ENCODE measurements at regions of chr17 and their contacts with region 1.

Region 1: GRCh38 chr17:49997791-49998703 is 3.0 kb upstream of the DLX3 start:
- DNase-seq: peak; percentile 72 to 89 (median 80)
- H3K4me3 ChIP-seq: no peak overlapping the region
- H3K4me3 Mint-ChIP-seq: no peak overlapping the region
- H3K27ac ChIP-seq: no peak overlapping the region
- H3K27ac Mint-ChIP-seq: no peak overlapping the region
- H3K4me1 ChIP-seq: peaks cover 22% of the 10 kb centered on the region
- H3K4me1 Mint-ChIP-seq: peaks cover 25 to 39% (median 29%) of the 10 kb centered on the region in 3 donors
- H3K27me3 ChIP-seq: peaks cover 58% of the 10 kb centered on the region
- H3K27me3 Mint-ChIP-seq: peaks cover 53 to 80% of the 10 kb centered on the region in 2 donors

Region 2: DNA sequence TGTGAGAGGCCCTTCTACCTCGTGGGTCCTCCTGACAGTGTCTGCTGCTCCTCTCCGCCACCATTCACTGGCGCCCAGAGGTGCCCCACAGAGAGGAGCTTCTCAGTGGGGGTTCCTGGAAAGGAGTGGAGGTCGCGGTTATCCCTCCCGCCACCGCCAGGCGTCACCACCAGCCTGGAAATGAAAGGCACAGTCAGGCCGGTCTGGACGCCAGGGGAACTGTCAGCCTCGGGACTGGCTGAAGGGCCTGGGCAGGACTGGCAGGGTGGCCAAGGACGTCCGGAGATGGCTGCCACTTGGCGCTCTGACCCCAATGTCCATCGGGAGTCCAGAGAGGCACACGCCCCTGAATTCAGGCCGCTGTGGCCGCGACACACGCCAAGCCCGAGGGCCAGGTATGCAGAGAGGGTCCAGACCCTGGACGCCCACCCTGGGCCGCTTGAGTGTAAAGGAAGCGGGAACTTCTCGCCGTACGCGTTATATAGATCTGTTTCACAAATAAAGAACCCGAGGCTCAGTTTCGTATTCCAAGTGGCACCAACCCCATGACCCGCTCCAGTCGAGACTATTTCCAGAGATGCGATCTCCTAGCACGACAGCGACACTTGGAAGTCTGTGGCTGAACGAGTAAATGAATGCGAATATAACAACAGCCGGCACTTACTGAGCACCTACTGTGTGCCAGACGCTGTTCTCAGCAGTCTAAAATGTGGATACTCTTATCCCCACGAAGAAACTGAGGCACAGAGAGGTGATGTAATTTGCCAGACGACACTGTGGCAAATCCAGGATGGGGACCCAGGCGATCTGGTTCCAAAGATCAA is 430.0 kb before region 1 on chr17:
- CTCF ChIA-PET with region 1: interaction called, 49 read pairs
- POLR2A ChIA-PET with region 1: no interaction called
- DNase-seq: peak; percentile 69 to 84 (median 75)
- H3K4me3 ChIP-seq: peak overlapping the region; percentile 59
- H3K4me3 Mint-ChIP-seq: peak overlapping the region; percentile 48 to 79 (median 66)
- H3K27ac ChIP-seq: no peak overlapping the region
- H3K27ac Mint-ChIP-seq: peak overlapping the region in 4 of 8 donors; percentile 11 to 50 (median 32)
- H3K4me1 ChIP-seq: peaks cover 16% of the 10 kb centered on the region
- H3K4me1 Mint-ChIP-seq: peaks cover 13 to 24% (median 17%) of the 10 kb centered on the region in 3 donors
- H3K27me3 ChIP-seq: no peaks in the 10 kb centered on the region
- H3K27me3 Mint-ChIP-seq: peaks cover 18 to 23% of the 10 kb centered on the region in 2 donors

Region 3: DNA sequence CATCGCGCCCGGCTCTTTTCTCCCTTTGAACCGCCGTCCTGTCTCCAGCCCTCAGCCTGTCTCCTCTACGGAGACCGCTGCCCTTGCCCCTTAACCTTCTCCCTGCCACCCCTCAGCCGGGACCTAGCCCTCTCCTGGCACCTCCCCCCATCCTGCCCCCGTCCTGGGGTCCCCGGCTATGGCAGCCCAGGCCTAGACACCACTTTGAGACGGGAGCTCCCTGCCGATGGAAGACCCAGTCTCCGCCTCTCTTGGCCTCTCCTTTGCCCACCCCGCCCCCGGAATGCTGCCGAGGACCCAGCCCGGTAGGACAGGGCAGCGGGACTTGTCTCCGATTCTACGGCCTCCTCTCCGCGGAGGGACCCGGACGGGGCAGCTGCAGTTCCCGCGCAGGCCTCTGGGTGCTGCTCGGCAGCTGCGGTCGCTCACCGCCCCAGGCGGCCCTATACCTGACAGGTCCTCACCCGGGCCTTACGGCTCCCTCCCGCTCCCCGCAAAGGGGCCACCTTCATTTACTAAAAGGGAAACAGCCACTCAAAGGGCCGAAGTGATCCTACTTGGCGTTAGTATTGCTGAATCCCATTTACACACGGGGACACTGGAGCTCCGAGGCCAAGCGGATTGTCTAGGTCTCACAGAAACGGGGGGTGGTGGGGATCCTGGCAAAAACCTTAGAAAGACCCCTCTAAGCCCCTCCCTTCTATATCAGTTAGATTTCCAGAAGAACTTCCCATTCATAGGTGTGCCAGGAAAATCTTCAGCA is 117.6 kb before region 1 on chr17:
- CTCF ChIA-PET with region 1: interaction called, 35 read pairs
- POLR2A ChIA-PET with region 1: no interaction called
- DNase-seq: peak; percentile 52 to 76 (median 58)
- H3K4me3 ChIP-seq: no peak overlapping the region
- H3K4me3 Mint-ChIP-seq: peak overlapping the region in 3 of 7 donors; percentile 34 to 39 (median 35)
- H3K27ac ChIP-seq: no peak overlapping the region
- H3K27ac Mint-ChIP-seq: no peak overlapping the region
- H3K4me1 ChIP-seq: peaks cover 6% of the 10 kb centered on the region
- H3K4me1 Mint-ChIP-seq: peaks cover 0 to 7% (median 5%) of the 10 kb centered on the region in 3 donors
- H3K27me3 ChIP-seq: peaks cover 12% of the 10 kb centered on the region
- H3K27me3 Mint-ChIP-seq: peaks cover 31 to 60% of the 10 kb centered on the region in 2 donors

Region 4: GRCh38 chr17:49910094-49910857 is 87.8 kb before region 1 on chr17:
- CTCF ChIA-PET with region 1: interaction called, 14 read pairs
- POLR2A ChIA-PET with region 1: no interaction called
- DNase-seq: no peak
- H3K4me3 ChIP-seq: no peak overlapping the region
- H3K4me3 Mint-ChIP-seq: peak overlapping the region in 6 of 7 donors; percentile 37 to 61 (median 52)
- H3K27ac ChIP-seq: no peak overlapping the region
- H3K27ac Mint-ChIP-seq: peak overlapping the region in 1 of 8 donors; percentile 29
- H3K4me1 ChIP-seq: no peaks in the 10 kb centered on the region
- H3K4me1 Mint-ChIP-seq: peaks cover 2 to 11% (median 9%) of the 10 kb centered on the region in 3 donors
- H3K27me3 ChIP-seq: peaks cover 49% of the 10 kb centered on the region
- H3K27me3 Mint-ChIP-seq: peaks cover 48 to 88% of the 10 kb centered on the region in 2 donors

Region 5: GRCh38 chr17:49952209-49952911 is 45.7 kb before region 1 on chr17:
- CTCF ChIA-PET with region 1: interaction called, 159 read pairs
- POLR2A ChIA-PET with region 1: interaction called, 7 read pairs
- DNase-seq: peak; percentile 65 to 85 (median 69)
- H3K4me3 ChIP-seq: no peak overlapping the region
- H3K4me3 Mint-ChIP-seq: no peak overlapping the region
- H3K27ac ChIP-seq: no peak overlapping the region
- H3K27ac Mint-ChIP-seq: no peak overlapping the region
- H3K4me1 ChIP-seq: no peaks in the 10 kb centered on the region
- H3K4me1 Mint-ChIP-seq: no peaks in the 10 kb centered on the region
- H3K27me3 ChIP-seq: peaks cover 31% of the 10 kb centered on the region
- H3K27me3 Mint-ChIP-seq: peaks cover 39 to 77% of the 10 kb centered on the region in 2 donors

Region 6: GRCh38 chr17:49972486-49973278 is 25.4 kb before region 1 on chr17:
- CTCF ChIA-PET with region 1: interaction called, 64 read pairs
- POLR2A ChIA-PET with region 1: no interaction called
- DNase-seq: no peak
- H3K4me3 ChIP-seq: no peak overlapping the region
- H3K4me3 Mint-ChIP-seq: peak overlapping the region in 3 of 7 donors; percentile 24 to 77 (median 67)
- H3K27ac ChIP-seq: no peak overlapping the region
- H3K27ac Mint-ChIP-seq: peak overlapping the region in 1 of 8 donors; percentile 39
- H3K4me1 ChIP-seq: peaks cover 30% of the 10 kb centered on the region
- H3K4me1 Mint-ChIP-seq: peaks cover 27 to 47% (median 40%) of the 10 kb centered on the region in 3 donors
- H3K27me3 ChIP-seq: peaks cover 50% of the 10 kb centered on the region
- H3K27me3 Mint-ChIP-seq: peaks cover 58 to 81% of the 10 kb centered on the region in 2 donors

Region 7: DNA sequence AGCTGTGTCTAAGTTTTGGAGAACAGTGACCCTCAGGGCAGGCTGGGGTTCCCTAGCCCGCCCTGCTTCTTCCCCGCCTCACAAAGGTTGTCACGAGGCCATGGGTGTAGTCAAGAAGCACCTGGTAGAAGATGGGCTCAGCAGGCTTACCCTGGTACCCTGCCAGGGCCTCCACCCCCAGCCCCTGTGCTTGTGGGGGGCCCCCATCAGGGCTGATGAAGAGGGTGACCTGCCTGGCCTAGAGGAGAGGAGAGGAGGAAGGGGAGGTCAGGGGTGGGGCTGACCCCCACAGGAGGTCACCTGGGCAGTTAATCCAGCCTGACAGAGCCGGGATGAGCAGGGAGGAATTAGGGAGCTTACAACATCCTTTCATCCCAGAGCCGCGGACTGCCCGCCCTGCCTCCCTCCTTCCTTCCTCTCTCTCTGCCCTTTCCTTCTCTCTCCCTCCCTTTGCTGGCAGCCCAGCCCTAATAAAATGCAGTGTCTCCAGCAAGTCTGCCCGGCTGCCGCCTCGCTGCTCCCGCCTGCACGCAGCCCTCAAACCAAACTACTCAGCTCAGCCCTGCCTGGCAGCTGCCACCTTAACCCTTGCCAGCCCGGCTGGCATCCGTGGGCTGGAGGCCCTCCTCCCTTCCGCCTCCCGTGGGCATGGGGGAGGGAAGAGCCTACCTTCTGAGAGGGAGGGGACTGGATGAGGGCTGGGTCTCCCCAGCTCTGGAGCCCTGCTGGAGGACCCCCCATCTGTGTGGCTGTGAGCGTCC is 10.2 kb before region 1 on chr17:
- CTCF ChIA-PET with region 1: interaction called, 28 read pairs
- POLR2A ChIA-PET with region 1: no interaction called
- DNase-seq: no peak
- H3K4me3 ChIP-seq: no peak overlapping the region
- H3K4me3 Mint-ChIP-seq: no peak overlapping the region
- H3K27ac ChIP-seq: no peak overlapping the region
- H3K27ac Mint-ChIP-seq: no peak overlapping the region
- H3K4me1 ChIP-seq: no peaks in the 10 kb centered on the region
- H3K4me1 Mint-ChIP-seq: peaks cover 0 to 2% (median 2%) of the 10 kb centered on the region in 3 donors
- H3K27me3 ChIP-seq: peaks cover 26% of the 10 kb centered on the region
- H3K27me3 Mint-ChIP-seq: peaks cover 41 to 77% of the 10 kb centered on the region in 2 donors